B cell (primary cell): ENCODE measurements at regions of chr6 and their contacts with region 1.

Region 1: GRCh38 chr6:27753668-27754407 is 158.4 kb downstream of the OR2B2 start:
- DNase-seq: peak; percentile 82
- ATAC-seq: peak; percentile 48
- H3K4me3 ChIP-seq: peak overlapping the region; percentile 42 to 73 (median 63)
- H3K4me3 Mint-ChIP-seq: peak overlapping the region; percentile 91
- H3K27ac ChIP-seq: no peak overlapping the region
- H3K27ac Mint-ChIP-seq: peak overlapping the region; percentile 91
- H3K4me1 ChIP-seq: peaks cover 22 to 25% of the 10 kb centered on the region in 2 donors
- H3K4me1 Mint-ChIP-seq: peaks cover 30% of the 10 kb centered on the region
- H3K27me3 ChIP-seq: peaks cover 0 to 26% (median 5%) of the 10 kb centered on the region in 4 experiments
- H3K27me3 Mint-ChIP-seq: peaks cover 6% of the 10 kb centered on the region
- CTCF ChIP-seq: no peak

Region 2: DNA sequence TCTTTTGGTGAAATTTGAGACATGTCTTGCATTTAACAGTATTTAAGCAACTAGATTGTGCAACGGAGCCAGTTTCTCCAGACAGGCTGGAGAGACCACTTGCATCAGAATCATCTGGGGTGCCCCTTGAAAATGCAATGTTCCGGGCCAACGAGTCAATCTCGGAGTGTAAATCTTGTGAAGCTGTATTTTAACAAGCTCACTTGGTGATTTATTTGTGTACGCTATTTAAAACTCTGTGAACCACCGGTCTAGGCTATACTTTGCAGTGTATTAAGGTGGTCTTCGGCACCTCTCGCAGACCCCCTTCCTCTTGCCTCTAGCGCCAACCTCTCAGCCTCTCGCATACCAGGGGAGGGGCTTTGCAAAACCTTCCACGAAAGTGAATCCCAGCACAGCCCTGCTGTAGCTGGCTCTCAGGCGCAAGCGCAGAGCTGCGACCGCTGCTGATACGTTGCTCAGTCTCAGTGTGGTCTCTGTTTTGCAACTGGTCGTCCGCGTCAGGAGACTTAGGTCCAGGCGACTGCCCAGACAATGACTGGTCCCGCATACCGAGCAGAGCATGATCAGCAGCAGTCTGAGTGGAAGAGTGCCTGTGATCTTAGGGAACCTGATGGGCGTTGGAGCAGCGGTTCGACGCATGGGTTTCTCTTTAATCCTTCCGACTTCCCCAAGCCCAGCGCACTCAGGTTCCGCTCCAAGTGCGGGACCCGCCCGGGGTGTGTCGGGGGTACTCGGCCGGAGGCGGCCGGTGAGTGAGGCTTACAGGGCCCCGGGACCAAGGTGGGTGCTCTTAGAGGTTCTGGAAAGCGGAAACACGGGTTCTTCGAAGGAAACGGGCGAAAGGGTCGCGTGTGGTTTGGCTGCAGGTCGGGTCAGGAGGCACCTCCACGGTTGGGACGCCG is 365.3 kb before region 1 on chr6 and contains the start of gene ZNF391:
- CTCF ChIA-PET with region 1: no interaction called
- POLR2A ChIA-PET with region 1: no interaction called
- intact Hi-C with region 1: loop called (anchors 5 kb)
- DNase-seq: peak; percentile 88
- ATAC-seq: peak; percentile 87
- H3K4me3 ChIP-seq: peak within 1 kb of the TSS; percentile 70 to 97 (median 94)
- H3K4me3 Mint-ChIP-seq: peak within 1 kb of the TSS; percentile 99
- H3K27ac ChIP-seq: peak within 1 kb of the TSS; percentile 64 to 83
- H3K27ac Mint-ChIP-seq: peak within 1 kb of the TSS; percentile 98
- H3K4me1 ChIP-seq: peaks cover 10 to 16% of the 10 kb centered on the region in 2 donors
- H3K4me1 Mint-ChIP-seq: peaks cover 17% of the 10 kb centered on the region
- H3K27me3 ChIP-seq: peaks cover 0 to 2% (median 0%) of the 10 kb centered on the region in 4 experiments
- H3K27me3 Mint-ChIP-seq: peaks cover under 1% of the 10 kb centered on the region
- CTCF ChIP-seq: no peak
- total RNA-seq, gene ZNF391: 4.4 and 7.0 TPM in 2 replicates

Region 3: DNA sequence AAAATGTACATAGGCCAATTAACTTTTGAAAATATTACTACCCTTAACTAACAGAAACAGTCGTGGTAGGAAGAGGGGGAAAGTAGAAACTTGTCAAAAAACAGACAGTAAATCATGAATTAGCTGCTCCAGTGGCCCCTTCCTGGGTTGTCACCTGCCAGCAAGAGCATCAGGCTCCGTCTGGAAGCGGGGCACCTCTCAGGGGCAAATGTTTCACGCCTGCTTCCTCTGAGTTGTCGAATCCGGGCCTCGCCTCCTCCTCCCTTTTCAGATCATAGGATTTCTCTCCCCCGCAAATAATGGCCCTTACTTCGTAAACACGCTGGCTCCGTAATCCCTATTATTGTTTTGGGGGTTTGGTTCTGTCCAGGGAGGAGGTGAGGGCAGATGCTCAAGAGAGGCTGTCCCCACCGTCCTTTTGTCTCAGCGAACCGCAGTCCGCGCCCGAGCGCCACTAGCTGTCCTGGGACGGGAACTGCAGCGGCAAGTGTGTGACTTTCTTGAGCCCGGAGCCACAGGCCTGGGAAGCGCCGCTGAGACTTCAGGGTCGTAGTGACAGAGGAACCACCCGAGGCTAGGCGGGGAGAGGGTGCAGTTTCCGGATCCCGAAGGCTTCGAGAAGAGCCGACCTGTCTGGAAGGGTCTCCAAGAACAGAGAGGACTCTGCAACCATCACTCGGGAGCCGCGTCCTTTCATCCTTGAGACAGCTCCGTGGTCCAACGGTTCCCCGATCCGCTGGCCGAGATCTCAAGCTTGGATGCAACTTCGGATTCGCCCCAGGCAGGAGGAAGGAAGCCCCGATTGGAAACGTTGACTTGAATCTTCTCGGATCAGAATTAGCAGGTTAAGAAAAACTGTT is 66.5 kb before region 1 on chr6:
- CTCF ChIA-PET with region 1: interaction called, 18 read pairs
- POLR2A ChIA-PET with region 1: interaction called, 3 read pairs
- intact Hi-C with region 1: loop called (anchors 1 kb)
- DNase-seq: peak; percentile 87
- ATAC-seq: peak; percentile 73
- H3K4me3 ChIP-seq: peak overlapping the region; percentile 27 to 99 (median 77)
- H3K4me3 Mint-ChIP-seq: peak overlapping the region; percentile 93
- H3K27ac ChIP-seq: peak overlapping the region in 1 of 2 donors; percentile 32
- H3K27ac Mint-ChIP-seq: peak overlapping the region; percentile 91
- H3K4me1 ChIP-seq: peaks cover 7 to 15% of the 10 kb centered on the region in 2 donors
- H3K4me1 Mint-ChIP-seq: peaks cover 16% of the 10 kb centered on the region
- H3K27me3 ChIP-seq: peaks cover 0 to 8% (median 2%) of the 10 kb centered on the region in 4 experiments
- H3K27me3 Mint-ChIP-seq: peaks cover 4% of the 10 kb centered on the region
- CTCF ChIP-seq: peak; percentile 69

Region 4: DNA sequence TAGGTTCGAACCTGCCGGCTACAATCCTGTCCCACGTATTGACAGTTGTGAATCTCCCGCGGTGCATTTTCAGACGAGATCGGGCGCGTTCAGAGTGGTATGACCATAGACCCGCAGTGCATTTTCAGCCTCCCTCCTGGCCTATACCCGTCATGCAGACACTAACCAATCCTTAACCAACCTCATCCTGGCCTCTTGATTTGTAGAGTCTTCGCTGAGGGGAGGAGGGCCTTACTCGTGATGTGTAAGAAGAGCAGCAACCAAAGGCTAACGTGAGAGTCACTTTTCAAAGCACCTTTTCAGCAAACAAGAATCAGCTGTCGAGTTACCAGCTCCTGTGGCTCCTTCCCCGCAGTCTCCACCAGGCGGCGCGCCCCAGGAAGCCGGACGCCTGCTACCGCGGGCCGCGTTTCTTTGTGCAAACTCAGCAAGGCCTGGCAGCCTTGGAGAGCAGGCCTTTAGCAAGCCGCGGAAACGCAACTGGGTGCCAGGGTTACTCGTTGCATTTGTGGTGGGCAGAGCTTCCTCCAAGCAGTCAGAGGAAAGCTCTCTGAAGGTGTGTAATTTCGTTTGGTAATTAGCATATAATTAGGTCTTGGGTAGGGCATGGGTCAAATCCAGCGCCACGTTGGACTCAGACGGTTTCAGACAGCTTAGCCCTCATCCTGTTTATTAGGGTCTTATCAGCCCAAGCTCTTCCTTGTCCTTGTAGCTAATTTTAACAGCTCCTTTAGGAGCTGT is 18.6 kb after region 1 on chr6:
- CTCF ChIA-PET with region 1: interaction called, 62 read pairs
- POLR2A ChIA-PET with region 1: interaction called, 3 read pairs
- intact Hi-C with region 1: loop called (anchors 1 kb)
- DNase-seq: peak; percentile 87
- ATAC-seq: peak; percentile 88
- H3K4me3 ChIP-seq: no peak overlapping the region
- H3K4me3 Mint-ChIP-seq: peak overlapping the region; percentile 65
- H3K27ac ChIP-seq: peak overlapping the region in 1 of 2 donors; percentile 2
- H3K27ac Mint-ChIP-seq: peak overlapping the region; percentile 84
- H3K4me1 ChIP-seq: peaks cover 26 to 29% of the 10 kb centered on the region in 2 donors
- H3K4me1 Mint-ChIP-seq: peaks cover 36% of the 10 kb centered on the region
- H3K27me3 ChIP-seq: peaks cover 0 to 4% (median 2%) of the 10 kb centered on the region in 4 experiments
- H3K27me3 Mint-ChIP-seq: peaks cover 10% of the 10 kb centered on the region
- CTCF ChIP-seq: peak; percentile 93

Region 5: DNA sequence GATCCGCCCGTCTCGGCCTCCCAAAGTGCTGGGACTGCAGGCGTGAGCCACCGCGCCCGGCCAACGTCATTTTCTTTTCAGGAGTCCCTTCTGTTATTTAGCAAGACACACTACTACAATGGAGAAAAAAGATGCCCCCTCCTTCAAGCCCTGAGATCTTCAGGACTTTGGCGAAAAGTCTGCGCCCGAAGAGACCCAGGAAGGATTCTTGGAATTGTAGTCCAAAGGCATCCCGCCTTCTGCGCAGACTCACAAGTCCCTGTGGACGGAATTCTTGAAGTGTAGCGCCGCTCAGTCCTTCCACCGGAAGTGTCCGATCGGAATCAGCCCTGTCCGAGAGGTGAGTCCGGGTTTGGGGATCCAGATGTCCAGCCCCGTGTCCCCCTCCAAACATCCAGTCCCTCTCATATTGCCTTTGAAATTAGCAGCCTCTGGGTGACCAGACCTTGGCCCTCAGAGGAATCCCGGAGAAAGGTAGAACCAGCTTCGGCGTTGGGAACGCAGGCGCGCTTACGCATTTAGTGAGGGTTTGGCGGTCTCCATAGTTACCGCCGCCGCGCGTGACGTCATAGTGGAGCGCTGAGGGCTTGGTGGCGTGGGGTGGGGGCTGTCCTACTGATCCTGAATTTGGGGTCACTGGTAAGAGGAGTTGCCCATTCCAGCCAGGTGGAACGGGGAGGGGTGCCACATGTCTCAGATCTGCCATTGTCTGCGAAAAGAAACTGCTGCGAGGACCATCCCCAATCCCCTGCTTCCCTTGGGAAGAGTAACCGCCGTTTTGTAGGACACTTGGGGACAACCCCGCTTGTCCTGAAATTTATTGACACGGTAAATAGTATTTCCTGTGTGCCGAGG is 327.0 kb after region 1 on chr6:
- CTCF ChIA-PET with region 1: no interaction called
- POLR2A ChIA-PET with region 1: no interaction called
- intact Hi-C with region 1: loop called (anchors 1 kb)
- DNase-seq: peak; percentile 98
- ATAC-seq: peak; percentile 67
- H3K4me3 ChIP-seq: peak overlapping the region; percentile 67 to 96 (median 88)
- H3K4me3 Mint-ChIP-seq: peak overlapping the region; percentile 92
- H3K27ac ChIP-seq: peak overlapping the region; percentile 94 to 100
- H3K27ac Mint-ChIP-seq: peak overlapping the region; percentile 98
- H3K4me1 ChIP-seq: peaks cover 10 to 22% of the 10 kb centered on the region in 2 donors
- H3K4me1 Mint-ChIP-seq: peaks cover 36% of the 10 kb centered on the region
- H3K27me3 ChIP-seq: no peaks in the 10 kb centered on the region
- H3K27me3 Mint-ChIP-seq: no peaks in the 10 kb centered on the region
- CTCF ChIP-seq: no peak